ENCODE measurements at regions of chr18 and their contacts with region 1.

Region 1: DNA sequence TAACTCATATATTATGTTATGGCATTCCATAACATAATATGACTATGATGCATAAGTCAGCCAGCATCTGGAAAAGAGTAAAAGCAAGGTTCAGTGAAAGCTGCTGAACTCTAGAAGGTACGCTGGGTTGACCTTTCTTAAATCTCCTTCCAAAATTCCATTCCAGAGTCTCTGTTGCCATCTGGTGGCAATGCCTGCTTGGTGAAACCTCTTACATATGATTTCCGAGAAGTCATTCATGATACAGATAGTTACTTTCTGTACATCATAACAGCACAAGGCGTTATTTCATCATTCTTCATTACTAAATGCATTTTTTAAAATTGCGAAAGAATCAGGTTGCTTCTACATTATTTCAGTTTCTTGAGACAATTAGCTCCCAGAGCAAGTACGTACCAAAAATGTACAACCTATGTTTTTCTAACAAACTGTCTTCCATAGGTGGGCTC is 7.0 kb upstream of the EPG5 start:
- H3K4me3 ChIP-seq: no peak overlapping the region
- H3K27ac ChIP-seq: no peak overlapping the region
- H3K4me1 ChIP-seq: no peaks in the 10 kb centered on the region
- CTCF ChIP-seq: peak; percentile 62

Region 2: DNA sequence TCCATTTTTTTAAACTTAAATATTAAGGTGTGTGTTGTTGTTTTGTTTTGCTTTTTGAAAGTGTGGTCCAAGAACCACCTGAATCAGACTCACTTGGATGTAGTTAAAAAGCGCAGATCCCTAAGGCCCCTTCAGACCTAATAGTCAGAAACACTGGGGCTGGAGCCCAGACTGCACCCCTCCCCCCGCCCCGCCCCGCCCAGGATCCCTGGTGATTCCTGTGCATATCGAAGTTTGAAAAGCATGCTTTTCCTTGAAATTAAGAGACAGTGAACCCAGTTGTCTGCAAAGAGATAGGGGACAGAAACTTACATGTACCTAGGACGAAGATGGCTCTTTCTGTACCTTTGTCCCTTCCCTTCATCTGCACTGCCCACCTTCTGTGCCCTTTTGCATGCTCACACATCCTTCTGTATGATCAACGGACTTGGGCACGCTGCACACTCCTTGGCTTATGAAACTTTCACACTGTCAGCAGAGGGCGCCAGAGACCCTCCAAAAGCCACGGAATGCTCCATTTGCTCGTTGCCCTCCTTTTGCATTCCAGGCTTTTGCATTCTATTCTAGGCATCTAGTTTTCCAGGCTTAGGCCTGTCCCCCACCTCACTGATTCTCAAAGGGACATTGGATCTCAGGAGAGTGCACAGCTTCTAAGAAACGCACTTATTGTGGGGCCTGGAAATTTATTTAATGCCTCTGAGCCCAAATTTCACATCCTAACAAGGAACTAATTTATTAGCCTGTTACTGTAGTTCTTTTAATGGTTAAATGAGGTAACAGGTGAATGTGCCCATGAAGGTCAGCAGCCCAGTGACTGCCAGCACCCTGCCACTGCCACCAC is 282.9 kb before region 1 on chr18:
- CTCF ChIA-PET with region 1: interaction called, 10 read pairs
- POLR2A ChIA-PET with region 1: no interaction called
- H3K4me3 ChIP-seq: no peak overlapping the region
- H3K27ac ChIP-seq: no peak overlapping the region
- H3K4me1 ChIP-seq: no peaks in the 10 kb centered on the region
- CTCF ChIP-seq: peak; percentile 90

Region 3: DNA sequence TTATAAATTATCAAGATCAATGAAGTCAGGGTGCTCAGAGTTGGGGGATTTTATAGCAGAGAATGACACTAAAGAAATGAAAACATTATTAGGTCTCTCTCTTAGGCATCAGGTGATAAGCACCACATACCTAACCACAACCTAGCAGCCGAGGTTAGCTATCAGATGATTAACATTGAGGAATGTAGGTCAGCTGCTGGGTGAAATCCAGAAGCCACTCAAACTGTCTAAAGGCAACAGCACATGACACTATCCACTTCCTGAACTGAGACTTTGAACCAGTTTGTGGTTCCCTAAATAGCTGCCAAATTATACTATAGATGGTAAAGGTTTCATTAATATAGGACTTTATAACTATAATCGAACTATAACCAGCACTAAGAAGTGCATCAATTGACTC is 11.7 kb before region 1 on chr18:
- CTCF ChIA-PET with region 1: interaction called, 10 read pairs
- POLR2A ChIA-PET with region 1: no interaction called
- H3K4me3 ChIP-seq: no peak overlapping the region
- H3K27ac ChIP-seq: no peak overlapping the region
- H3K4me1 ChIP-seq: no peaks in the 10 kb centered on the region; the same call in 1 of the 2 replicates
- CTCF ChIP-seq: no peak

Region 4: DNA sequence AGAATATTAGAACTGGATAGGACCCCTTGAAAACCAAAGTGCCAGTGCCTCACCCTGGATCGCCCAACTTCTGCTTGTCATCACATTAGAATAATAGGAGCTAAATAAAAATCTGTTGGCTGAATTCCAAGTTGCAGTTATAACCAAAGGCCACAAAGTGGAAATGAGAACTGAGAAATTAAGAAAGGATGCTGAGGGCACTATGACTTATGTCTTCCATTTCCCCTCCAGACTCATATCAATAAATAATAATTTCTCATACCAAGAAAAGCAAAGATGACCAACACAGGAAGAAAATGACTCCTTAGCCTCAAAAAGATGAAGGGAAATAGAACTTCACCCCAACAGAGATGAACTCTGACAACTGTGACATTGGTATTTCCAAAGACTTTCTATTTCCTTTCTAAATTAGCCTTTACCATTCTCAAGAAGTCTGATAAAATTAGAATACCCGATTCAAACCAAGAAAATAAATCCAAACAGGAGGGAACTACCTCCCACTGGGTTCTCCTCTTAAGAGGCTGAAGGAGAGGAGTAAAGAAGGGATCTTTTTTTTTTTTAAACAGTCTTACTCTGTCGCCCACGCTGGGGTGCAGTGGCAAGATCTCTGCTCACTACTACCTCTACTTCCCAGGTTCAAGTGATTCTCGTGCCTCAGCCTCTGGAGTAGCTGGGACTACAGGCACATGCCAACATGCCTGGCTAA is 39.5 kb after region 1 on chr18:
- CTCF ChIA-PET with region 1: no interaction called
- POLR2A ChIA-PET with region 1: no interaction called
- H3K4me3 ChIP-seq: no peak overlapping the region
- H3K27ac ChIP-seq: no peak overlapping the region
- H3K4me1 ChIP-seq: no peaks in the 10 kb centered on the region
- CTCF ChIP-seq: no peak